ENCODE measurements at regions of chr5 and their contacts with region 1.

Region 1: DNA sequence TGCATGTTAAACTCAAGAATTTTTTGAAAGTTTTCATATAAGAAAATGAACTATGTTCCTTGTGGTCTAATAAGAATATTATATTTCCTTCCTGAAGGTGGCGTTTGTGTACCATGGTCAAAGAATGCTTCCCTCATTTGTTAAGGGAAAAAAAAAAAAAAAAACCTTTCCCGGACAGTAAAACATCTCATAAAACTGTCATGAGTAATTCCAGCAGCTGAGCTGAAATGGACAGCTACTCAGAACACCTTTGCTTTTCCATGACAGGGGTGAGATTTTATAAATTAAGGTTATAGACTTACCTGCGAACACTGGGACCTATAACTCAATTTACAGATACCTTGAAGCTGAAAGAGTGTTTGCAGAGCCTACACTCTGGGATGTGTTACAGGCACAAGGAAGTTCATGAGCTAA is 113.2 kb upstream of the RANBP3L start:
- DNase-seq: no peak
- ATAC-seq: peak in 6 of 8 donors; percentile 43 to 61 (median 52)
- H3K4me3 ChIP-seq: no peak overlapping the region
- H3K27ac ChIP-seq: no peak overlapping the region
- H3K4me1 ChIP-seq: peaks cover 0 to 7% (median 4%) of the 10 kb centered on the region in 9 donors
- H3K27me3 ChIP-seq: no peaks in the 10 kb centered on the region
- CTCF ChIP-seq: peak; percentile 28 to 66 (median 50)

Region 2: DNA sequence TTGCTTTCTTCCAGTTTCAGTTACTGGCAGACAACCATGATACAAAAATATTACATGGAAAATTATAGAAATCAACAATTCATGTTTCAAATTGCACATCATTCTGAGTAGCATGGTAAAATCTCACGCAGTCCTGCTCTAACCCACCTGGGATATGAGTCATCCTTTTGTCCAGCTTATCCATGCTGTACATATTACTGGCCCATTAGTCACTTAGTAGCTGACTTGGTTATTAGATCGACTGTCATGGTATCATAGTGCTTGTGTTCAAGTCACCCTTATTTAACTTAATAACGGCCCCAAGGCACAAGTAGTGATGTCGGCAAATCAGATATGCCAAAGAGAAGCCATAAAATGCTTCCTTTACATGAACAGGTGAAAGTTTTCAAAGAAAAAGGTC is 214.4 kb before region 1 on chr5:
- intact Hi-C with region 1: no loop called
- DNase-seq: no peak
- ATAC-seq: no peak
- H3K4me3 ChIP-seq: no peak overlapping the region
- H3K27ac ChIP-seq: no peak overlapping the region
- H3K4me1 ChIP-seq: peaks cover 0 to 17% (median 10%) of the 10 kb centered on the region in 9 donors
- H3K27me3 ChIP-seq: no peaks in the 10 kb centered on the region
- CTCF ChIP-seq: no peak

Region 3: GRCh38 chr5:36311956-36312355 is 102.9 kb before region 1 on chr5:
- intact Hi-C with region 1: no loop called
- DNase-seq: no peak
- ATAC-seq: no peak
- H3K4me3 ChIP-seq: no peak overlapping the region
- H3K27ac ChIP-seq: no peak overlapping the region
- H3K4me1 ChIP-seq: no peaks in the 10 kb centered on the region
- H3K27me3 ChIP-seq: no peaks in the 10 kb centered on the region
- CTCF ChIP-seq: no peak

Region 4: DNA sequence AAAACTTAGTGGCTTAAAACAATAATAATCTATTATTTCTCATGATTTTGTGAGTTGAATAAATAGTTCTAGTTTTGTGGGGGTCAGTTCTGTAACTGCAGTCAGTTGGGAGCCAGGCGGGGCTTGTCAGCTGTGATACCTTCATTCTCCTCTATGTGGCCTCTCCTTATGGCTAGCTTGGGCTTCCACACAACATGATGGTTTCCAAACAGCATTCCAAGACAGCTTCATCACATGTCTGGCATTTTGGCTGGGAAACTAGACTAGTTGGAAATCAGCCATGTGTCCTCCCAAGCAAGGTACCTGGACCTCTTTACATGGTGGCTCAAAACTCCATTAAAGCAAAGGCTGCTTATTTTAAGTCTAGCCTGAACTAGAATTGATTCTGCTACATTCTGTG is 51.8 kb before region 1 on chr5:
- intact Hi-C with region 1: no loop called
- DNase-seq: no peak
- ATAC-seq: no peak
- H3K4me3 ChIP-seq: no peak overlapping the region
- H3K27ac ChIP-seq: peak overlapping the region in 1 of 10 donors; percentile 34
- H3K4me1 ChIP-seq: peaks cover 0 to 4% (median 0%) of the 10 kb centered on the region in 9 donors
- H3K27me3 ChIP-seq: no peaks in the 10 kb centered on the region
- CTCF ChIP-seq: no peak

Region 5: GRCh38 chr5:36507332-36507952 is 92.6 kb after region 1 on chr5:
- intact Hi-C with region 1: loop called in 7 of 10 experiments (anchors 5 to 10 kb)
- DNase-seq: peak; percentile 72 to 73
- ATAC-seq: peak in 5 of 8 donors; percentile 55 to 70 (median 65)
- H3K4me3 ChIP-seq: no peak overlapping the region
- H3K27ac ChIP-seq: no peak overlapping the region
- H3K4me1 ChIP-seq: no peaks in the 10 kb centered on the region
- H3K27me3 ChIP-seq: no peaks in the 10 kb centered on the region
- CTCF ChIP-seq: peak; percentile 57 to 91 (median 80)

Region 6: GRCh38 chr5:36611520-36612274 is 196.8 kb after region 1 on chr5:
- intact Hi-C with region 1: loop called in 6 of 10 experiments (anchors 5 to 10 kb)
- DNase-seq: peak in 1 of 2 donors; percentile 44
- ATAC-seq: peak; percentile 27 to 69 (median 58)
- H3K4me3 ChIP-seq: peak overlapping the region in 1 of 10 donors; percentile 66
- H3K27ac ChIP-seq: peak overlapping the region in 9 of 10 donors; percentile 16 to 86 (median 51)
- H3K4me1 ChIP-seq: peaks cover 0 to 56% (median 26%) of the 10 kb centered on the region in 9 donors
- H3K27me3 ChIP-seq: peaks cover 0 to 7% (median 0%) of the 10 kb centered on the region in 7 donors
- CTCF ChIP-seq: no peak

Region 7: DNA sequence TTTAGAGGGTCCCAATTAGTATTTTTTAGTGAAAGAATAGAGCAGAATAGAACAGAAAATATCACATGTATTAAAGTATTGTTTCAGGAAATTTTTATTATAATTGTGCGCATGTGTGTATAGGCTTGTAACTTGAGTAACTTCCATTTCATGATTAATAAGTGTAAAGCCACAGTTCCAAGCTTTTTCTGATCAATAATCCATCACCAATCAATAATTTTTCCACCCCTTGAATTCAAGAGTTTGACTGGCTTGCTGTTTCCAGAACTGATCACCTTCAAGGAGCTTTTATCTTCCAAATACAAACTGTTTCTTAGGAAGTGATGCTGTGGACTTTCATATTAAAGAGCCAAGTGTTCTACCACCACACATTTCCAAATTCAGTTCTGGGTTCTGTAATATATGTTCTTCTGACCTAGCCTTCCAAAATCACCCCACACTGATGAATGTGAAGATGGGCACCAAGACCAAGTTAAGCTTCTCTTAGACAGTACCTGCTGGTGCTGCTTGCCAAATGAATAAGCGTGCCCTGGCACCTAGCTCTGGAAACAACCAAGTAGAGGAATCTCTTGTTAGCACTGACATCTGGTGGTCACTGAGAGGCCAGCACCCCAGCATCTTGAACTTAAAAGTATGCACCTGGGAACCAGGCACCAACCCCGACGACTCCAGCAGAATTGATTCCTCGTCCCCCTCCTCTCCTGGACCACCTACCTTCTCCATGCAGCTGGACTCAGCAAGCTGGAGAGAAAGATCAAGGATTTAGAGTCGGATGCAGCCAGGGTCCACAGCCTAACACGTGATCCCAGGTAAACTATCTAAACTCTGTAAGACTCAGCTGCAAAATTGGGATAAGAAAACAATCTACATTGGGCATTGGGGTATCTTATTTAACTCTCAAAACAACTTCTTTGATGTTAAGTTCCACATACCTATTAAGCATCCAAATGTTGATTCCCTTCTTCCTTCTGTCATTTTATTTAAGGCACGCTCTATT is 281.1 kb after region 1 on chr5:
- intact Hi-C with region 1: loop called (anchors 1 to 5 kb)
- DNase-seq: peak; percentile 29 to 42
- ATAC-seq: peak in 1 of 8 donors; percentile 38
- H3K4me3 ChIP-seq: no peak overlapping the region
- H3K27ac ChIP-seq: no peak overlapping the region
- H3K4me1 ChIP-seq: peaks cover 5 to 35% (median 19%) of the 10 kb centered on the region in 9 donors
- H3K27me3 ChIP-seq: no peaks in the 10 kb centered on the region
- CTCF ChIP-seq: peak; percentile 27 to 71 (median 64)

Measured in heart right ventricle (tissue), 16 donors.